OCI-LY7 (cell line): ENCODE measurements at regions of chr15 and their contacts with region 1.

Region 1: GRCh38 chr15:52466134-52466701 is 62.5 kb downstream of the MYO5A start:
- DNase-seq: peak; percentile 97
- H3K4me3 ChIP-seq: peak overlapping the region; percentile 51
- H3K27ac ChIP-seq: peak overlapping the region; percentile 81
- H3K4me1 ChIP-seq: peaks cover 53% of the 10 kb centered on the region
- CTCF ChIP-seq: peak; percentile 78

Region 2: GRCh38 chr15:52438047-52438446 is 28.2 kb before region 1 on chr15:
- CTCF ChIA-PET with region 1: no interaction called
- POLR2A ChIA-PET with region 1: no interaction called
- intact Hi-C with region 1: no loop called
- DNase-seq: no peak
- H3K4me3 ChIP-seq: no peak overlapping the region
- H3K27ac ChIP-seq: no peak overlapping the region
- H3K4me1 ChIP-seq: no peaks in the 10 kb centered on the region
- CTCF ChIP-seq: no peak

Region 3: DNA sequence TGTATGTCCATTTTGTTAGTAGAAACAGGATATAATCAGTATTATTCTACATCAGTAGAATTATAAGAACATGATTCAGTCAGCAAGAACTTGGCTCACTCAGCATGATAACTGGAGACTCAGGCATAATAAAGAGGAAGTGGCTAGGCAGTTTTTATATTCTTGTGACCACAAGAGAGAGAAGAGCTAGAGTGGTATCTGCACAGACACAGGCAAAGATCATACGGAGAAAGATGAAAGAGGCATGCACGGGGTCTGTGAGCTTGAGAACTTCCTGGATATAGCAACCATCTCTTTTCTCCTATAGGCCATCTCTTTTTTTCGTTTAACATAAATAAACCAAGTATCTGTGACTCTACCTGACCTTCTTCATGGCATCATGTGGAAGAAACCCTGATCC is 15.7 kb after region 1 on chr15:
- CTCF ChIA-PET with region 1: interaction called, 24 read pairs
- POLR2A ChIA-PET with region 1: interaction called, 34 read pairs
- intact Hi-C with region 1: loop called (anchors 1 kb)
- DNase-seq: peak; percentile 94
- H3K4me3 ChIP-seq: peak overlapping the region; percentile 55
- H3K27ac ChIP-seq: peak overlapping the region; percentile 93
- H3K4me1 ChIP-seq: peaks cover 57% of the 10 kb centered on the region
- CTCF ChIP-seq: no peak

Region 4: GRCh38 chr15:52503788-52504496 is 37.7 kb after region 1 on chr15:
- CTCF ChIA-PET with region 1: no interaction called
- POLR2A ChIA-PET with region 1: interaction called, 8 read pairs
- intact Hi-C with region 1: loop called (anchors 1 kb)
- DNase-seq: peak; percentile 92
- H3K4me3 ChIP-seq: peak overlapping the region; percentile 55
- H3K27ac ChIP-seq: peak overlapping the region; percentile 94
- H3K4me1 ChIP-seq: peaks cover 70% of the 10 kb centered on the region
- CTCF ChIP-seq: no peak

Region 5: GRCh38 chr15:52568601-52569256 is 102.5 kb after region 1 on chr15 and contains the start of gene ARPP19:
- CTCF ChIA-PET with region 1: no interaction called
- POLR2A ChIA-PET with region 1: no interaction called
- intact Hi-C with region 1: loop called (anchors 1 kb)
- DNase-seq: peak; percentile 90
- H3K4me3 ChIP-seq: peak within 1 kb of the TSS; percentile 85
- H3K27ac ChIP-seq: peak within 1 kb of the TSS; percentile 75
- H3K4me1 ChIP-seq: peaks cover 30% of the 10 kb centered on the region
- CTCF ChIP-seq: peak; percentile 58
- total RNA-seq, gene ARPP19: 48.0 and 68.3 TPM in 2 replicates